ENCODE measurements at regions of chr2 and their contacts with region 1.

Region 1: DNA sequence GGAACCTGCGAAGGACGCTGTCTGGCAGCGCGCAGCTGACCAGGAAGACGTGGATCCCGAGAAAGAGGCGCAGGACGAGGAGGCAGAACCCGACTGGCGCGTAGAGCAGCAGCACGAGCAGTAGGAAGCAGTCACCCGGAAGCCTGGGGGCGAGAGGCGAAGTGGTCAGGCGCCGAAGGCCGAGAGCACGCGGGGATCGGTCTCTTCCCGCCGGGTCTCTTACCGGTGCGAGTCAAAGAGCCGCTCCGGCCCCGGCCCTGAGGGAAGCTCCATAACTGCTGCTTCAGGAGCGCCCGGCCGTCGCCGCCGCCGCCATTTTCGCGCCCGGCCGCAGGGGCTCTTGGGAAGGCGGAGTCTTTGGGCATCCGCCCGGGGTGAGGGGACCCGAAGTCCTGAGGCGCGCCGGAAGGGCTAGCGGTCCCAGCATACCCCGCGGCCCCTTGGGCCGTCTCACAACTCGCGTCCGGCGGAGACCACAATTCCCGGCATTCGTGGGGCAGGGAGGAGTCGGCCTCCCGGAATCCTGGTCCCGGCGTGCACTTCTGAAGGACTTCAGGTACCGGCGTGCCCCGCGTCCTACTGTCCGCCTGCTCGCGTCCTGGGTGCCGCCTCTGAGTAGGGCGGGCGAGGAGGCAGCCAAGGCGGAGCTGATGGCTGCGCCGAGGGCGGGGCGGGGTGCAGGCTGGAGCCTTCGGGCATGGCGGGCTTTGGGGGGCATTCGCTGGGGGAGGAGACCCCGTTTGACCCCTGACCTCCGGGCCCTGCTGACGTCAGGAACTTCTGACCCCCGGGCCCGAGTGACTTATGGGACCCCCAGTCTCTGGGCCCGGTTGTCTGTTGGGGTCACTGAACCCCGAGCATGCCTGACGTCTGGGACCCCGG is at the starts of genes AUP1 and HTRA2:
- DNase-seq: peak; percentile 97
- H3K4me3 Mint-ChIP-seq: peak within 1 kb of the TSS; percentile 98
- H3K27ac Mint-ChIP-seq: peak within 1 kb of the TSS; percentile 91
- H3K4me1 Mint-ChIP-seq: peaks cover 39% of the 10 kb centered on the region
- H3K27me3 Mint-ChIP-seq: no peaks in the 10 kb centered on the region
- total RNA-seq, gene AUP1: 92.1 to 98.0 TPM
- total RNA-seq, gene HTRA2: 70.6 to 72.3 TPM

Region 2: GRCh38 chr2:74037379-74037860 is 492.2 kb before region 1 on chr2:
- CTCF ChIA-PET with region 1: no interaction called
- POLR2A ChIA-PET with region 1: no interaction called
- intact Hi-C with region 1: no loop called
- DNase-seq: no peak
- H3K4me3 Mint-ChIP-seq: no peak overlapping the region
- H3K27ac Mint-ChIP-seq: no peak overlapping the region
- H3K4me1 Mint-ChIP-seq: peaks cover 64% of the 10 kb centered on the region
- H3K27me3 Mint-ChIP-seq: no peaks in the 10 kb centered on the region

Region 3: DNA sequence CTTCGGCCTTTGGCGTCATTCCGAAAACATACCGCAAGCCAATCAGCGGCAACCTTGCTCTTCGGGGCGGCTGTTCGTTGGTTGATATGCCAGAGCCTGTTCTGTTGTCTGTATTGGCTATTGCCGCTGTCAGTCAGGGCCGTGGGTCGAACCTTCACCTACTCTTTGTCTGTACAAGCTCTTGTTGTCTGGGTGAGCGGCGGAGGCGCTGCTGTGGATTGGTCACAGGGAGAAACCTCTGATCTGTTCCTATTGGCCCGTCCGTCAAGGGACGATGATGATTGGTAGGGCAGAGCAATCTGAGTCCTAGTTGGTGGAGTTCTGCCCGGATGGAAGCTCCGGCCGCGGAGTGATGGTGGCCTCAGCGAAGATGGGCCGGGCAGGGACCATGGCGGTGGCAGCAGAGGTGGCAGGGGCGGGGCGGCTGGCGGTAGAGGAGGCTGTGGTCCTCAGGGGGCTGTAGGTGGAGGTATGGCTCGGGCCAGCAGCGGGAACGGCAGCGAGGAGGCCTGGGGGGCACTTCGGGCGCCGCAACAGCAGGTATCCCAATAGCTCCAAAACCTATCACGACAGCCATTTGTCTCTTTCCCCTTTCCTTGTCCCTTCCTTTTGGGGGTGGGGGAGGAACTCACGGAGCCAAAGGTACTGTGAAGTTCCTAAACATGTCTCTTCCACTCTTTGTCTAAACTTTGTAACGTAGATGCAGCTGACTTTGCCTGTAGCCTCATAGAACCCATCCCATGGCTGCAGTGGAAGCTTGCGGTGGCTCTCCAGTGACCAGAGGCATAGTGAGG is 71.3 kb before region 1 on chr2 and contains the start of gene WBP1:
- CTCF ChIA-PET with region 1: interaction called, 19 read pairs
- POLR2A ChIA-PET with region 1: interaction called, 15 read pairs
- intact Hi-C with region 1: loop called (anchors 1 kb)
- DNase-seq: peak; percentile 100
- H3K4me3 Mint-ChIP-seq: peak within 1 kb of the TSS; percentile 87
- H3K27ac Mint-ChIP-seq: peak within 1 kb of the TSS; percentile 99
- H3K4me1 Mint-ChIP-seq: peaks cover 55% of the 10 kb centered on the region
- H3K27me3 Mint-ChIP-seq: peaks cover 2% of the 10 kb centered on the region
- total RNA-seq, gene WBP1: 32.9 to 35.9 TPM

Region 4: GRCh38 chr2:74482801-74483674 is 46.6 kb before region 1 on chr2 and contains the starts of genes CCDC142 and TTC31:
- CTCF ChIA-PET with region 1: interaction called, 55 read pairs
- POLR2A ChIA-PET with region 1: interaction called, 31 read pairs
- intact Hi-C with region 1: loop called (anchors 1 kb)
- DNase-seq: peak; percentile 96
- H3K4me3 Mint-ChIP-seq: peak within 1 kb of the TSS; percentile 100
- H3K27ac Mint-ChIP-seq: peak within 1 kb of the TSS; percentile 99
- H3K4me1 Mint-ChIP-seq: peaks cover 35% of the 10 kb centered on the region
- H3K27me3 Mint-ChIP-seq: no peaks in the 10 kb centered on the region
- total RNA-seq, gene CCDC142: 10.1 to 10.8 TPM
- total RNA-seq, gene TTC31: 27.3 to 29.1 TPM

Region 5: DNA sequence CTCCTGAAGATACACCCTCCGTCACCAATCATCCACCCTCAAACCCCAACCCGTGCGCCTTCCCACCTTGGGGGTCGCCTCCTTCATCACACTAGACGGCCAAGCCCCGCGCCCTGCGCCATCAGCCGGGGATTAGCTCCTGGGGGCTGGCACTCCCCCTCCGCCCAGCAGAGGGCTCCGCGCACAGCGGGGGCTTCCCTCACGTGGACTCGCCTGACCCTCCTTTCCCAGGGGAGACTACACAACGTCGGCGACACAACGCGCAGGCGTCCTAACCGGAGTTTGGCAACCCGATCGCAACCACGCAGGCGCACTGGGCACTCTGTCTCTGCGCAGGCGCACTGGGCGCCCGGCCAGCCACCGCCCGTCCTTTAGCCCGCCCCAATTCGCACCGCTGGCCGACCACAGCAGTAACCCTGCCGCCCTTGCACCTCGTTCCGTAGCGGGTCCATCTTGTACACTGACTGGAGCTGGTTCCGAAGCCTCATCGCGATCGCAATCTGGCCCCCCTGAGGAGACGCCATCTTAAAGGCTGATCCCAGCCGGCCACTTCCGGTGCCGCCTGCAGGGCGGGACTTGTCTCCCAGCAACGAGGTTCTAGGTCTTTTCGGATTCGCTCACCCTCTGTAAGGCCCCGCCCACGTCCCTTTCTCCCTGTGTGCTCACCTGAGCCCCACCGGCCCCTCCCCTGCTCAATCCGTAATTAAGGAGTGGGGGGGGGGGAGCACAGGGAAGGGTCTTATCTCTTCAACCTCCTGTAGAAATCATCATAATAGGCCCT is 22.3 kb before region 1 on chr2 and contains the start of gene PCGF1:
- CTCF ChIA-PET with region 1: interaction called, 8 read pairs
- POLR2A ChIA-PET with region 1: interaction called, 11 read pairs
- intact Hi-C with region 1: loop called (anchors 1 kb)
- DNase-seq: peak; percentile 99
- H3K4me3 Mint-ChIP-seq: peak within 1 kb of the TSS; percentile 91
- H3K27ac Mint-ChIP-seq: peak within 1 kb of the TSS; percentile 98
- H3K4me1 Mint-ChIP-seq: peaks cover 48% of the 10 kb centered on the region
- H3K27me3 Mint-ChIP-seq: peaks cover 33% of the 10 kb centered on the region
- total RNA-seq, gene PCGF1: 22.6 to 26.0 TPM

Region 6: DNA sequence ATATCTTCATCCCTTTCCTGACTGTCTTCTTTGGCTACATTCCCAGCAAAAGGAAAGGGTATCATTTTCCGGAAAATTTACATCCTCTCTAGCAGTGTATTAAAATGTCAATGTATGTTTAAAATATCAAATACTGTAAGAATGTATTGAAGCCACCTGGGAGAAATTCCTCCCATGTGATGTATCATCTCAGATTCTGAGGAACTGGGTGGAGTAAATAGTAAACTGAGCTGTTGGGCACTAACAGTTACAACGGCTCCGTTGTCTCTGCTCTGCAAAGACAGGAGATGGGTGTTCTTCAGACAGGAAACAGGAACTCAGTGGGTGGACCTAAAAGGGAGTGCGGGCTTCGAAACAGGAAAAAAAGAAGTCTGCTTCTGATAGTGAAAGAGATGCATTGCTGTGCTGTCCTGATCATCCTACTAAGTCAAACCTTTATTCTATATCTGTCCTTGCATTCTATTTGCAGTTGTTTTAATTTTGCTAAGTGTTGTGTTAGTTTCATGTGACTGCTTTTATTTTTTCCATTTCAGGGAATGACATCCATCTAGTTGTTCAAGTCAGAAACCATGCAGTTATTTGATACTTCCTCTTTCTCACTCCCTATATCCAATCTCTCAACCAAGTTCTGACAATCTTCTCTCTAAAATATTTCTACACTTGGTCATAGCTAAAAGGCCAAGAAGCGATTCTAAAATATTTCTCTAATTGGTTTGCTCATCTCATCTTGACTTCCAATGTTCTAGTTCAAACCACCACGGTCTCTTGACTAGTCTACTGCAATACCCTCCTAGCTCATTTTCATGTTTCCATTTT is 44.4 kb after region 1 on chr2:
- CTCF ChIA-PET with region 1: interaction called, 7 read pairs
- POLR2A ChIA-PET with region 1: no interaction called
- intact Hi-C with region 1: loop called (anchors 5 kb)
- DNase-seq: no peak
- H3K4me3 Mint-ChIP-seq: peak overlapping the region; percentile 22
- H3K27ac Mint-ChIP-seq: no peak overlapping the region
- H3K4me1 Mint-ChIP-seq: peaks cover 24% of the 10 kb centered on the region
- H3K27me3 Mint-ChIP-seq: no peaks in the 10 kb centered on the region

Region 7: DNA sequence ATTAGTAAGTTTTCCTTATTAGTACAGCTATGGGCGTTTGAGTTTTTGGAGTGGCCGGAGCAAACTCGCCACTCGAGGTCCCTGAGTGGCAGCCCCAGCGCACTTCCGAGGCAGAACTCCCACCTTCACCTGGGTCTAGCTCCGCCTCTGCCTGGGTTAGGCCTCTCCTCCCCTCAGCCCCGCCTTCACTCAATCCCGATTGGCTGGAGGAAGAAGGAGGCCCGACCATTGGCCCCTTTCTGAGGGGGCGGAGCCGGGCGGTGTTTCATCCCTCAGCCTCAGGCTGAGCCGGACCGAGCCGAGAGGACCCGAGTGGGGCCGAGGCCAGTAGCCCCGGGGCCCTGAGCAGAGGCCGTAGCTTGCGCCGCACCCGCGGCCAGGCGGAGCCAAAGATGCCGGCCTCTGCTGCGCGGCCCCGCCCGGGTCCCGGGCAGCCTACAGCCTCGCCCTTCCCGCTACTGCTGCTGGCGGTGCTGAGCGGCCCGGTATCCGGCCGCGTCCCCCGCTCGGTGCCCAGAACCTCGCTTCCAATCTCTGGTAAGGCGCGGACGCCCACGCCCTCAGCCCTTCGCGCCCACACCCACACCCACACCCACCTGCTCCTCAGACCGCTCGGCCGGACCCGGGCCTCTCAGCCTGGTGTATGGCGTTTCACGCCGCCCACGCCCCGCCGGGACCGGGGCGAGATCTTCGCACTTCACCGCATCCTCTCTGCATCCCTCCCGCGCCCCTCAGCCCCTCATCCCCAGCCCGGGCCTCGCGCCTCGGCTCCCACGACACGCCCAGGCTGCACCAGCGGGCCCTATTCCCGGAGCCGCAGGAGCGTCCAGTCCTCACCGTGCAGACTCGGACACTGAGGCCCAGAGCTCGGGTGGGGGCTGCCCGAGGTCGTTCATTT is 124.6 kb after region 1 on chr2 and contains the start of gene SEMA4F:
- CTCF ChIA-PET with region 1: no interaction called
- POLR2A ChIA-PET with region 1: interaction called, 3 read pairs
- intact Hi-C with region 1: loop called (anchors 1 kb)
- DNase-seq: peak; percentile 97
- H3K4me3 Mint-ChIP-seq: peak within 1 kb of the TSS; percentile 80
- H3K27ac Mint-ChIP-seq: peak within 1 kb of the TSS; percentile 31
- H3K4me1 Mint-ChIP-seq: peaks cover 13% of the 10 kb centered on the region
- H3K27me3 Mint-ChIP-seq: no peaks in the 10 kb centered on the region
- total RNA-seq, gene SEMA4F: 7.7 to 7.9 TPM